Transverse colon (tissue), 4 donors: ENCODE measurements at regions of chr1 and their contacts with region 1.

Region 1: DNA sequence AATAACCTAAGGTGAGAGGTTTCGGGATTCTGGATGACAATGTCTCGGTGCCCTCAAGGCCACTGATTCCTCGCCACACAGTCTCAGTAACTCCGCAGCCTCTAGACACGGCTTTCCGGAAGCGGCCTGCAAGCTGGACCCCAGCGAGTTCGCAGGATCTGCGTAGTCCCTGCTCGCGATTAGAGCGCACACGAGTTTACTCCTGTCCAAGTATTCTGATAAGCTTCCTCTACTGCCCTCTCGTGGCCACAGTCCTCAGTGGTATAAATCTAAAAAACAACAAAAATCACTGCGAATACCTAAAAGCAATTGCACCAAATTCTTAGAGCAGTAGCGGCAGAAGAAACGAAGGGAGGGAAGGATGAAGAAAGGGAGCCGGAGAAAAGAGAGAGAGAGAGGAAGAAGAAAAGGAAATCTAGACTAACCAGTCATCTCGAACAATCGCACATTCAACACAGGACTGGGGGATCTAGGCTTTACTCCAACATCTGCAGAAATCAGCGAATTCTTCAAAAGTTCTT is 1.1 kb upstream of the PLXNA2 start:
- DNase-seq: peak; percentile 93
- H3K4me3 ChIP-seq: peak overlapping the region in 3 of 4 donors; percentile 70 to 94 (median 93)
- H3K27ac ChIP-seq: peak overlapping the region; percentile 91 to 92 (median 91)
- H3K4me1 ChIP-seq: peaks cover 3 to 40% (median 34%) of the 10 kb centered on the region in 4 donors
- H3K27me3 ChIP-seq: no peaks in the 10 kb centered on the region
- CTCF ChIP-seq: peak; percentile 73 to 94 (median 79)
- EP300 ChIP-seq: no peak
- POLR2A ChIP-seq: peak; percentile 2

Region 2: GRCh38 chr1:208024406-208024805 is 220.8 kb before region 1 on chr1:
- in situ Hi-C with region 1: loop called (anchors 5 to 10 kb)
- intact Hi-C with region 1: loop called (anchors 1 kb)
- DNase-seq: no peak
- H3K4me3 ChIP-seq: no peak overlapping the region
- H3K27ac ChIP-seq: no peak overlapping the region
- H3K4me1 ChIP-seq: peaks cover 4 to 9% (median 7%) of the 10 kb centered on the region in 4 donors
- H3K27me3 ChIP-seq: no peaks in the 10 kb centered on the region
- CTCF ChIP-seq: no peak
- EP300 ChIP-seq: no peak
- POLR2A ChIP-seq: no peak

Region 3: DNA sequence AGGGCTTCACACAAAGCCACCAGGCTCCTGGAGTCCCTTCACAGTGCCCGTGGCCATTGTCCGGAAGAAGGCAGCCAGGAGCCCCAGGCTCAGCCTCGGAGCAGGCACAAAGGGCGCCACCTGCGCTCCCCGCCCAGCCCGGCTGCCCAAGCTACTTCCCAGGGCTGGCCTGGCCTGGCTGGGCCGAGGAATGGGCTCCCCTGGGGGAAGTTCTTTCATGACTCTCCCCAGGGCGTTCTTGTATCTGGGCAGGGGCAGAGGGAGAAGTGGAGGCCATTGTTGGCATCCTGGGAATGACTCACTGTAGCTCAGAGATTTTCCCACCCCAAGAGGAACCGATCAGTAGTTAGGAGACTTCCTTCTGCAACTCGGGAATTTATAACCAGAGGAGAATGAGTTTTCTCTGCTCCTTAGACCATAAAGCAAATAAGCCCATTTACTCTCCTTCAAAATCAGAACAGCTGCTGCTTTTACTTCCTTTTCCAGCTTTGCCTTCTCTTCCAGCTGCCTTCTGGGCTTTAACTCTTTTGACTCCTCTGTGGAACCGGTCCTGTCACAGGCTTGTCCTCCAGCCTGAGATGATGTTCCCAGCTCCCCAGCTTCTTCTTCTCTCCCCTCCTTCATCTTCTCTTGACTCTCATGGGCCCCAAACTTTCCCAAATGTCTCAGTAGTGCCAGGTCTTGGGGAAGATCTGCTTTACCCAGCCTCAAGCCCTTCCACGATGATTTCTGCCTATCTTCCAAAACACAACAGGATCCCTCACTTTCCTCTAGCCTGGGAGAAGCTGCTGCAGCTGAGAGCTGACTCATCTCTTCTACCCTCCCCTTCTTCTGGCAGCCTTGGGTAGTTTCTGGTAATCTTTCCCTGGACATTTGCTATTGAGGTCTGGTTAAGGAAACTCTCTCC is 215.6 kb before region 1 on chr1:
- in situ Hi-C with region 1: loop called in 3 of 4 experiments (anchors 5 to 10 kb)
- intact Hi-C with region 1: loop called (anchors 1 kb)
- DNase-seq: peak; percentile 19
- H3K4me3 ChIP-seq: no peak overlapping the region
- H3K27ac ChIP-seq: peak overlapping the region; percentile 75 to 80 (median 76)
- H3K4me1 ChIP-seq: peaks cover 19 to 29% (median 21%) of the 10 kb centered on the region in 4 donors
- H3K27me3 ChIP-seq: no peaks in the 10 kb centered on the region
- CTCF ChIP-seq: no peak
- EP300 ChIP-seq: no peak
- POLR2A ChIP-seq: no peak

Region 4: GRCh38 chr1:208132287-208132883 is 112.9 kb before region 1 on chr1:
- in situ Hi-C with region 1: loop called in 2 of 4 experiments (anchors 10 to 25 kb)
- intact Hi-C with region 1: loop called (anchors 5 kb)
- DNase-seq: peak; percentile 94
- H3K4me3 ChIP-seq: no peak overlapping the region
- H3K27ac ChIP-seq: peak overlapping the region; percentile 53 to 69 (median 62)
- H3K4me1 ChIP-seq: peaks cover 4 to 30% (median 15%) of the 10 kb centered on the region in 4 donors
- H3K27me3 ChIP-seq: no peaks in the 10 kb centered on the region
- CTCF ChIP-seq: peak; percentile 74 to 95 (median 84)
- EP300 ChIP-seq: no peak
- POLR2A ChIP-seq: no peak